Endothelial cell of umbilical vein (primary cell): ENCODE measurements at regions of chr21 and their contacts with region 1.

Region 1: GRCh38 chr21:14864211-14865021 is 200.4 kb downstream of the NRIP1 start:
- DNase-seq: peak; percentile 67
- H3K4me3 ChIP-seq: no peak overlapping the region
- H3K27ac ChIP-seq: no peak overlapping the region
- H3K4me1 ChIP-seq: peaks cover 4% of the 10 kb centered on the region
- H3K27me3 ChIP-seq: no peaks in the 10 kb centered on the region
- CTCF ChIP-seq: peak; percentile 51 to 75
- POLR2A ChIP-seq: no peak

Region 2: DNA sequence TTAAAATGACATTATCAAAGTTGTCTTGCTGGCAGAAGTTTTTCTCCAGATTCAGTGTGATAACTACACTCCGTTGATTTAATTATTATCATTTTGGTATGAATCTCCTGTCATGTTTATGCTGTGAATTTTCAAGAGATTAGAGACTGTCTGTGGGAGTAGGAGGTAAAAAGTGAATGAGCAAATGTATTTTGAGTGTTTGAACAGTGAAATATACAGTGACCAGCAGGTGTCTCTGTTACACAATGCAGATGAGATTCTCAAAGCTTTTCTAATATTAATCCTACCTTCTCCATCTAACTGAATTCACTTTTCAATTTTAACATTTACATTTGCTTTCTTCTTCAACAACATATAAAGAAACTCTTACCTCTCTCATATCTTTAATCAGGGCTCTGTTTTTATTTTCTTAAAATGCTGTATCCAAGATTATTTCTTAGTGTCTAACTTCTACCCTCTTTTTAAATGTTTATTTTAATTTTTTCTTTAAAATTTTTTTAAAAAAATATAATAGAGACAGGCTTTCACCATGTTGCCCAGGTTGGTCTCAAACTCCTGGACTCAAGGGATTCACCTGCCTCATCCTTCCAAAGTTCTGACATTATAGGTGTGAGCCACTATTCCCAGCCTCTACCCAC is 460.6 kb before region 1 on chr21:
- CTCF ChIA-PET with region 1: interaction called, 8 read pairs
- POLR2A ChIA-PET with region 1: no interaction called
- dilution Hi-C with region 1: no loop called
- intact Hi-C with region 1: loop called (anchors 5 kb)
- DNase-seq: peak; percentile 45
- H3K4me3 ChIP-seq: no peak overlapping the region
- H3K27ac ChIP-seq: no peak overlapping the region
- H3K4me1 ChIP-seq: no peaks in the 10 kb centered on the region
- H3K27me3 ChIP-seq: no peaks in the 10 kb centered on the region
- CTCF ChIP-seq: peak; percentile 33 to 49
- POLR2A ChIP-seq: no peak

Region 3: GRCh38 chr21:14567331-14568279 is 296.8 kb before region 1 on chr21:
- CTCF ChIA-PET with region 1: no interaction called
- POLR2A ChIA-PET with region 1: no interaction called
- dilution Hi-C with region 1: no loop called
- intact Hi-C with region 1: no loop called
- DNase-seq: no peak
- H3K4me3 ChIP-seq: no peak overlapping the region
- H3K27ac ChIP-seq: no peak overlapping the region
- H3K4me1 ChIP-seq: no peaks in the 10 kb centered on the region
- H3K27me3 ChIP-seq: no peaks in the 10 kb centered on the region
- CTCF ChIP-seq: no peak
- POLR2A ChIP-seq: no peak

Region 4: GRCh38 chr21:14762734-14763694 is 101.4 kb before region 1 on chr21:
- CTCF ChIA-PET with region 1: no interaction called
- POLR2A ChIA-PET with region 1: no interaction called
- dilution Hi-C with region 1: no loop called
- intact Hi-C with region 1: no loop called
- DNase-seq: peak; percentile 8
- H3K4me3 ChIP-seq: no peak overlapping the region
- H3K27ac ChIP-seq: no peak overlapping the region
- H3K4me1 ChIP-seq: no peaks in the 10 kb centered on the region
- H3K27me3 ChIP-seq: no peaks in the 10 kb centered on the region
- CTCF ChIP-seq: no peak
- POLR2A ChIP-seq: no peak

Region 5: GRCh38 chr21:14889080-14889810 is 24.8 kb after region 1 on chr21:
- CTCF ChIA-PET with region 1: interaction called, 10 read pairs
- POLR2A ChIA-PET with region 1: no interaction called
- dilution Hi-C with region 1: no loop called
- intact Hi-C with region 1: loop called (anchors 1 kb)
- DNase-seq: no peak
- H3K4me3 ChIP-seq: no peak overlapping the region
- H3K27ac ChIP-seq: no peak overlapping the region
- H3K4me1 ChIP-seq: no peaks in the 10 kb centered on the region
- H3K27me3 ChIP-seq: no peaks in the 10 kb centered on the region
- CTCF ChIP-seq: no peak
- POLR2A ChIP-seq: no peak

Region 6: GRCh38 chr21:15192243-15192642 is 327.8 kb after region 1 on chr21:
- CTCF ChIA-PET with region 1: interaction called, 3 read pairs
- POLR2A ChIA-PET with region 1: no interaction called
- dilution Hi-C with region 1: no loop called
- intact Hi-C with region 1: loop called (anchors 10 kb)
- DNase-seq: no peak
- H3K4me3 ChIP-seq: no peak overlapping the region
- H3K27ac ChIP-seq: no peak overlapping the region
- H3K4me1 ChIP-seq: no peaks in the 10 kb centered on the region
- H3K27me3 ChIP-seq: no peaks in the 10 kb centered on the region
- CTCF ChIP-seq: no peak
- POLR2A ChIP-seq: no peak

Region 7: GRCh38 chr21:15592271-15592860 is 728.0 kb after region 1 on chr21:
- CTCF ChIA-PET with region 1: interaction called, 11 read pairs
- POLR2A ChIA-PET with region 1: no interaction called
- dilution Hi-C with region 1: no loop called
- intact Hi-C with region 1: loop called (anchors 1 kb)
- DNase-seq: peak; percentile 65
- H3K4me3 ChIP-seq: no peak overlapping the region
- H3K27ac ChIP-seq: no peak overlapping the region
- H3K4me1 ChIP-seq: no peaks in the 10 kb centered on the region
- H3K27me3 ChIP-seq: peaks cover 0 to 3% of the 10 kb centered on the region in 2 experiments
- CTCF ChIP-seq: peak; percentile 28 to 39
- POLR2A ChIP-seq: no peak